ENCODE measurements at regions of chr1 and their contacts with region 1.

Region 1: GRCh38 chr1:25031966-25032667 is 102.0 kb upstream of the RUNX3 start:
- DNase-seq: no peak
- H3K4me3 Mint-ChIP-seq: peak overlapping the region; percentile 74
- H3K27ac Mint-ChIP-seq: peak overlapping the region; percentile 92
- H3K4me1 Mint-ChIP-seq: peaks cover 73% of the 10 kb centered on the region
- H3K27me3 Mint-ChIP-seq: no peaks in the 10 kb centered on the region

Region 2: GRCh38 chr1:24925082-24925779 is 106.9 kb before region 1 on chr1:
- intact Hi-C with region 1: loop called (anchors 1 kb)
- DNase-seq: peak; percentile 69
- H3K4me3 Mint-ChIP-seq: peak overlapping the region; percentile 93
- H3K27ac Mint-ChIP-seq: peak overlapping the region; percentile 72
- H3K4me1 Mint-ChIP-seq: peaks cover 59% of the 10 kb centered on the region
- H3K27me3 Mint-ChIP-seq: no peaks in the 10 kb centered on the region

Region 3: GRCh38 chr1:24990779-24991641 is 41.1 kb before region 1 on chr1:
- intact Hi-C with region 1: loop called (anchors 2 kb)
- DNase-seq: no peak
- H3K4me3 Mint-ChIP-seq: no peak overlapping the region
- H3K27ac Mint-ChIP-seq: peak overlapping the region; percentile 15
- H3K4me1 Mint-ChIP-seq: peaks cover 62% of the 10 kb centered on the region
- H3K27me3 Mint-ChIP-seq: peaks cover 2% of the 10 kb centered on the region

Region 4: GRCh38 chr1:25006770-25007169 is 25.3 kb before region 1 on chr1:
- intact Hi-C with region 1: no loop called
- DNase-seq: no peak
- H3K4me3 Mint-ChIP-seq: no peak overlapping the region
- H3K27ac Mint-ChIP-seq: no peak overlapping the region
- H3K4me1 Mint-ChIP-seq: peaks cover 67% of the 10 kb centered on the region
- H3K27me3 Mint-ChIP-seq: no peaks in the 10 kb centered on the region

Measured in activated T-helper 2 cell treated with anti-CD3 and anti-CD28 coated beads, Interferon-gamma antibody, Interleukin-2, Interleukin-4, amounts not matched to agents 10 μg/mL and 5 μg/mL and 100 μg/mL, durations not matched to agents 14 hours and 24 hours and 36 hours (primary cell).